Activated CD4-positive, alpha-beta T cell treated with anti-CD3 and anti-CD28 coated beads, Interleukin-2, amount 10 ng/mL, durations not matched to agents 24 days and 14 days (primary cell): ENCODE measurements at regions of chr11 and their contacts with region 1.

Region 1: GRCh38 chr11:66616379-66617154 is at the start of gene RBM14:
- DNase-seq: peak; percentile 100
- H3K4me3 Mint-ChIP-seq: peak within 1 kb of the TSS; percentile 98
- H3K27ac Mint-ChIP-seq: peak within 1 kb of the TSS; percentile 99
- H3K4me1 Mint-ChIP-seq: peaks cover 33% of the 10 kb centered on the region
- H3K27me3 Mint-ChIP-seq: peaks cover 2% of the 10 kb centered on the region
- total RNA-seq, gene RBM14: 209 and 214 TPM in 2 replicates

Region 2: GRCh38 chr11:66466225-66467027 is 150.1 kb before region 1 on chr11 and contains the start of gene PELI3:
- intact Hi-C with region 1: loop called (anchors 5 kb)
- DNase-seq: peak; percentile 97
- H3K4me3 Mint-ChIP-seq: peak within 1 kb of the TSS; percentile 92
- H3K27ac Mint-ChIP-seq: peak within 1 kb of the TSS; percentile 84
- H3K4me1 Mint-ChIP-seq: peaks cover 33% of the 10 kb centered on the region
- H3K27me3 Mint-ChIP-seq: no peaks in the 10 kb centered on the region
- total RNA-seq, gene PELI3: 16.1 and 18.3 TPM in 2 replicates

Region 3: GRCh38 chr11:66510271-66510989 is 106.1 kb before region 1 on chr11 and contains the start of gene BBS1:
- intact Hi-C with region 1: no loop called
- DNase-seq: peak; percentile 95
- H3K4me3 Mint-ChIP-seq: peak within 1 kb of the TSS; percentile 91
- H3K27ac Mint-ChIP-seq: peak within 1 kb of the TSS; percentile 67
- H3K4me1 Mint-ChIP-seq: peaks cover 17% of the 10 kb centered on the region
- H3K27me3 Mint-ChIP-seq: no peaks in the 10 kb centered on the region
- total RNA-seq, gene BBS1: 17.6 and 18.3 TPM in 2 replicates

Region 4: GRCh38 chr11:66579017-66579606 is 37.5 kb before region 1 on chr11:
- intact Hi-C with region 1: loop called (anchors 5 kb)
- DNase-seq: peak; percentile 92
- H3K4me3 Mint-ChIP-seq: no peak overlapping the region
- H3K27ac Mint-ChIP-seq: no peak overlapping the region
- H3K4me1 Mint-ChIP-seq: peaks cover 11% of the 10 kb centered on the region
- H3K27me3 Mint-ChIP-seq: peaks cover 19% of the 10 kb centered on the region

Region 5: DNA sequence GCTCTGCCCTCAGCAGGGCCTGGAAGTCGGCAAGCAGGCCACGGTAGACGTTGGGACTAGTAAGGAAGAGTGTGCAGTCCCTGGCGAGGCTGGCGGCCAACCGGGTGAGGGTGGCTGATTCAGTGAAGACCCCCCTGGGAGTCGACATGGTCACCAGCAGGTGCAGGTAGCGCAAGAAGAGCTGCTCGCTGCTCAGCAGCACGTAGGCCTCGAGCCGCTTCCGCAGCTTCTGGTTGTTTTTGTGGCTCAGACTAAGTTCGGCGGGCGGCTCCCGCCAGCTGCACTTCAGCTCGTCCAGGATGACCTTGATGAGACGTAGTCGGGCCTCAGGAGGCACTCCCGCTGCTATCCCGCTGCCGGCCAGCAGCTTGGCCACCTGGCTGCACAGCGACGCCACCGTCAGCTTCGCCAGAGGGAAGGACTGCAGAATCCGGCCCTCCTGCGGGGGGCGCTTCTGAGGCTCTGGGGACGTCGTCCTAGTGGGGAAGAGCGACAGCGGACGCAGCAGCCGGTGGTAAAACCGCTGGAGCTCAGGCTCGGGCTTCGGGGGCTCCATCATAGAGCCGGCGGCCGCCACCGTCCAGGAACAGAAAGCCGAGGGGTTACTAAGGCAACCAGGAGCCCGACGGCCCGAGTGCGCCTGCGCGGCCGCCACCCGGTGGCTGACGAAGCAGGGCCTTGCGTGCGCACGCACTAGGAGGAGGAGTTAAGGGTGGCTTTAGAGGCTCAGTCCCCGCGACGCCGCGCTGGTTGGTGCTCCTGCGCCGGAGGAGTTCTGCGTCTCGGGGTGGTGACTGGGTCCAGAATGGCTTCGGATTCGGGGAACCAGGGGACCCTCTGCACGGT is 23.9 kb before region 1 on chr11 and contains the starts of genes CCDC87 and CCS:
- intact Hi-C with region 1: loop called (anchors 1 kb)
- DNase-seq: peak; percentile 99
- H3K4me3 Mint-ChIP-seq: peak within 1 kb of the TSS; percentile 99
- H3K27ac Mint-ChIP-seq: peak within 1 kb of the TSS; percentile 97
- H3K4me1 Mint-ChIP-seq: peaks cover 21% of the 10 kb centered on the region
- H3K27me3 Mint-ChIP-seq: no peaks in the 10 kb centered on the region
- total RNA-seq, gene CCDC87: 0.19 and 0.21 TPM in 2 replicates
- total RNA-seq, gene CCS: 28.3 and 31.4 TPM in 2 replicates

Region 6: GRCh38 chr11:66638177-66639065 is 21.9 kb after region 1 on chr11 and contains the start of gene RBM4:
- intact Hi-C with region 1: loop called (anchors 1 kb)
- DNase-seq: peak; percentile 99
- H3K4me3 Mint-ChIP-seq: peak within 1 kb of the TSS; percentile 91
- H3K27ac Mint-ChIP-seq: peak within 1 kb of the TSS; percentile 98
- H3K4me1 Mint-ChIP-seq: peaks cover 53% of the 10 kb centered on the region
- H3K27me3 Mint-ChIP-seq: no peaks in the 10 kb centered on the region
- total RNA-seq, gene RBM4: 109 and 133 TPM in 2 replicates

Region 7: DNA sequence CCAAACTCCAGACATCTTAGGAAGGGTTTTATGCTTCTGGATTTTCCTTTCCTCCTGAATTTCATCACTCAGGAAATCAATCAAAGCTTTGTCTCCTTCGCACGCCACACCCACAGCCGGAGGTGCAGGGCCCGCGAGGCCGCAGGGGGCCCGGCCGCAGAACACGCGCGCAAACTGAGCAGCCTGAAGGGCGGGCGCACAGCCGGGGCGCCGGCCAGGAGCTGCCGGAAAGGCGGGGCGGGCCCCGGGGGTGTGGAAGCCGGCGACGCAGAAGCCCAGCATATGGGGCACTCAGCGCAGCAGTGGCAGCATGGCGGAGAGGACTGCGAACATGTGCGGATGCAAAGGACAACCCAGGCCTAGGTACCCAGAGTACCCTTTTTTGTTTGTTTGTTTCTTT is 145.5 kb after region 1 on chr11:
- intact Hi-C with region 1: no loop called
- DNase-seq: no peak
- H3K4me3 Mint-ChIP-seq: no peak overlapping the region
- H3K27ac Mint-ChIP-seq: no peak overlapping the region
- H3K4me1 Mint-ChIP-seq: no peaks in the 10 kb centered on the region
- H3K27me3 Mint-ChIP-seq: no peaks in the 10 kb centered on the region